ENCODE measurements at regions of chr4 and their contacts with region 1.

Region 1: GRCh38 chr4:76430519-76431388 is 4.3 kb upstream of the SHROOM3 start:
- DNase-seq: peak; percentile 65
- ATAC-seq: no peak
- H3K4me3 ChIP-seq: no peak overlapping the region
- H3K4me3 Mint-ChIP-seq: no peak overlapping the region
- H3K27ac ChIP-seq: no peak overlapping the region
- H3K27ac Mint-ChIP-seq: no peak overlapping the region
- H3K4me1 ChIP-seq: peaks cover 7 to 15% of the 10 kb centered on the region in 2 donors
- H3K4me1 Mint-ChIP-seq: peaks cover 19% of the 10 kb centered on the region
- H3K27me3 ChIP-seq: no peaks in the 10 kb centered on the region
- H3K27me3 Mint-ChIP-seq: peaks cover 16% of the 10 kb centered on the region
- CTCF ChIP-seq: peak; percentile 89

Region 2: GRCh38 chr4:76504613-76505465 is 74.1 kb after region 1 on chr4:
- CTCF ChIA-PET with region 1: interaction called, 179 read pairs
- POLR2A ChIA-PET with region 1: no interaction called
- intact Hi-C with region 1: loop called (anchors 1 kb)
- DNase-seq: peak; percentile 64
- ATAC-seq: no peak
- H3K4me3 ChIP-seq: no peak overlapping the region
- H3K4me3 Mint-ChIP-seq: no peak overlapping the region
- H3K27ac ChIP-seq: no peak overlapping the region
- H3K27ac Mint-ChIP-seq: no peak overlapping the region
- H3K4me1 ChIP-seq: peaks cover 5 to 6% of the 10 kb centered on the region in 2 donors
- H3K4me1 Mint-ChIP-seq: peaks cover 9% of the 10 kb centered on the region
- H3K27me3 ChIP-seq: no peaks in the 10 kb centered on the region
- H3K27me3 Mint-ChIP-seq: peaks cover 3% of the 10 kb centered on the region
- CTCF ChIP-seq: peak; percentile 76

Region 3: DNA sequence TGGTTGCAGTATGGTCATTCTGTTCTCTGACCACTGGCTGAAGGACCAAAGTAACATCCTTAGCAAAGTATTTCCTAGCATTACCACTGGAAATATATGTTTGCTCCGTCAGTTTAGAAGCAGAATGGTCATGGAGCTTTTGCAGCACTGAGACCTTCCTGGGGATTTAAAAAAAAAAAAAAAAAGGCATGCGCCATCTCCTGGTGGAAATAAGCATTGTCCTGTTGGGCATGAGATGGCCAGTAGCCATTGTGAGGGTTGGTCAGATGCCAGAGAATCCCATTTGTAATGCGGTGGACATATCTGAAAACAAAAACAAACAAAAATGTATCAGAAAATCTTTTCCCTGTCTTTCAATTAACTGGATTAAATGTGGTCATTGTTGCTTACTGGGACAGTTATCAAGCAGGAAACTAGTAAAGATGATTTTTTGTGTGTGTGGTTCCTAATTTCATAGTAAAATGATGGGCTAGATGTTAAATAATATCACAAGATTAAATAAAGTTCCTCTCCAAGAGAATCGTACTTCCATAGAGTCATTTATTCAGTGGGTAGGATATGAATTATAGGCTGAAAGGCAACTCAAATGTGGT is 327.6 kb after region 1 on chr4:
- CTCF ChIA-PET with region 1: interaction called, 39 read pairs
- POLR2A ChIA-PET with region 1: no interaction called
- intact Hi-C with region 1: loop called (anchors 1 kb)
- DNase-seq: peak; percentile 34
- ATAC-seq: no peak
- H3K4me3 ChIP-seq: no peak overlapping the region
- H3K4me3 Mint-ChIP-seq: no peak overlapping the region
- H3K27ac ChIP-seq: no peak overlapping the region
- H3K27ac Mint-ChIP-seq: no peak overlapping the region
- H3K4me1 ChIP-seq: no peaks in the 10 kb centered on the region
- H3K4me1 Mint-ChIP-seq: no peaks in the 10 kb centered on the region
- H3K27me3 ChIP-seq: no peaks in the 10 kb centered on the region
- H3K27me3 Mint-ChIP-seq: peaks cover 10% of the 10 kb centered on the region
- CTCF ChIP-seq: peak; percentile 81

Region 4: DNA sequence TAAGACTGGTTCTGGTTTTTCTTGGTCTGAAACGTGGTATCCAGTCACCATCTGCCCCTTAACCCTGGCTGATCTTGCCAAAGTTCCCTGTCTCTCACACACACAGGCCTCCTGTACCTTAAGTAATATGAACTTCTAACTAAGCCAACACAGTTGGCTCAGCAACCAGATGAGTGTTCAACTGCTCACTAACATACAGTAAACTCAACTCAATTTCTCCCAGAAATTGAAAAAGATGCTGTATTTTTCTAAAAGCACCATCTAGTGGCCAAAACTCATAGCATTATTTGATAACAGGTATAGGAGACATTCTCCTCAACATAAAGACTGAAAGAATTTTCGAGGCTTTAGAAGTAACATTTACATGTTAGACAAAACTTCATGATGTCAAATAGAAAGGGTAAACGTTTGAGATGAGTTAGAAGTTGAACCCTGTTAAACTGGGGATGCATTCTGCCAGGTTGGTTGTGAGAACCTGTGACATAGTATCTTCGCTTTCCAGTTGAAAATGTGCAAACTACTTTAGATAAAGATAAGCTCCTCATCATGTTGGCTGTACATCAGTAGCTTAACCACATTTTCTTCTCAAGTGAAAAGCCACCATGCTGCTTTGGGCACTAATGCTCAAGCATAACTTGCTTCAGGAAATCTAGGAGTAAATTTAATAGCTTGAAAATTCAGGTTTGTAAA is 613.9 kb after region 1 on chr4:
- CTCF ChIA-PET with region 1: interaction called, 5 read pairs
- POLR2A ChIA-PET with region 1: no interaction called
- intact Hi-C with region 1: loop called (anchors 5 kb)
- DNase-seq: peak; percentile 45
- ATAC-seq: no peak
- H3K4me3 ChIP-seq: no peak overlapping the region
- H3K4me3 Mint-ChIP-seq: no peak overlapping the region
- H3K27ac ChIP-seq: peak overlapping the region in 1 of 2 donors; percentile 22
- H3K27ac Mint-ChIP-seq: peak overlapping the region; percentile 23
- H3K4me1 ChIP-seq: peaks cover 11 to 12% of the 10 kb centered on the region in 2 donors
- H3K4me1 Mint-ChIP-seq: peaks cover 20% of the 10 kb centered on the region
- H3K27me3 ChIP-seq: no peaks in the 10 kb centered on the region
- H3K27me3 Mint-ChIP-seq: no peaks in the 10 kb centered on the region
- CTCF ChIP-seq: peak; percentile 68

Region 5: DNA sequence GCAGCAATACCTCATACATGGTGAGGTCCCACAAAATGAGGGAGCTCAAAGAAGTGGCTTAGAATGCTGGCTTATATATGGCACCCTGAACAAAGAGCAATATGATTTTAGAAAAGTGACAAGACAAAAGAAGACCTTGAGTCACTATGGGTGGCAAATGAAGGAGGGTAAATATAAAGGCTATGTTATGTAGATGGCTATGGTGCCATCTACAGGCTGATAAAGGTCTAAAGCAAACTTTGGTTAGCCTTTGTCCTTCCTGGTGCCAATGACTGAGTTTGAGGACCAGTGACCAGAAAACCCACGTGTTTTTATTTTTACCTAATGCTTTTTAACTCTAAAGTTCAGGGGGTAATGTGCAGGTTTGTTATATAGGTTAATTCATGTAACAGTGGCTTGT is 878.1 kb after region 1 on chr4:
- CTCF ChIA-PET with region 1: no interaction called
- POLR2A ChIA-PET with region 1: no interaction called
- intact Hi-C with region 1: loop called (anchors 2 kb)
- DNase-seq: peak; percentile 16
- ATAC-seq: no peak
- H3K4me3 ChIP-seq: no peak overlapping the region
- H3K4me3 Mint-ChIP-seq: no peak overlapping the region
- H3K27ac ChIP-seq: no peak overlapping the region
- H3K27ac Mint-ChIP-seq: no peak overlapping the region
- H3K4me1 ChIP-seq: no peaks in the 10 kb centered on the region
- H3K4me1 Mint-ChIP-seq: no peaks in the 10 kb centered on the region
- H3K27me3 ChIP-seq: no peaks in the 10 kb centered on the region
- H3K27me3 Mint-ChIP-seq: peaks cover 3% of the 10 kb centered on the region
- CTCF ChIP-seq: peak; percentile 29

Region 6: DNA sequence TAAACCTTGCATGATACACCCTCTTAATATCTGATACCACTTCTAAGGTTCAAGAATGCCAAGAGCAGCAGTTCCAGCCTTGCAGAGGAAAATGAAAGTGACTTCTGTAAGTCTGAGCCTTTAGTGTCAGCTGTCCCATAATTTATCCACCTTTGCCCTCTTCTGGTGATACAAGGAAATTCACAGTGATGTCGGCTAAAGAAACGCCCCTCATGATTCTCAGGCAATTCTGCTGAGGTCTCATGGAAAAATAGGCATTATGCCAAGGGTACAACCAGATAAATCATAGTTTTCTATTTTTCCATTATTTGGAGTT is 1002.6 kb after region 1 on chr4:
- CTCF ChIA-PET with region 1: no interaction called
- POLR2A ChIA-PET with region 1: no interaction called
- intact Hi-C with region 1: loop called (anchors 10 kb)
- DNase-seq: peak; percentile 52
- ATAC-seq: peak; percentile 45
- H3K4me3 ChIP-seq: no peak overlapping the region
- H3K4me3 Mint-ChIP-seq: no peak overlapping the region
- H3K27ac ChIP-seq: no peak overlapping the region
- H3K27ac Mint-ChIP-seq: no peak overlapping the region
- H3K4me1 ChIP-seq: peaks cover 0 to 3% of the 10 kb centered on the region in 2 donors
- H3K4me1 Mint-ChIP-seq: peaks cover 6% of the 10 kb centered on the region
- H3K27me3 ChIP-seq: no peaks in the 10 kb centered on the region
- H3K27me3 Mint-ChIP-seq: no peaks in the 10 kb centered on the region
- CTCF ChIP-seq: peak; percentile 50

Measured in B cell (primary cell).